CD4-positive, alpha-beta T cell (primary cell): ENCODE measurements at regions of chr11 and their contacts with region 1.

Region 1: GRCh38 chr11:6619004-6619745 is at the start of gene TPP1:
- DNase-seq: peak; percentile 73 to 96 (median 84)
- ATAC-seq: peak; percentile 92
- H3K4me3 ChIP-seq: peak within 1 kb of the TSS; percentile 85
- H3K4me3 Mint-ChIP-seq: no peak within 1 kb of the TSS
- H3K27ac ChIP-seq: peak within 1 kb of the TSS; percentile 73 to 94
- H3K27ac Mint-ChIP-seq: no peak within 1 kb of the TSS
- H3K4me1 ChIP-seq: peaks cover 30% of the 10 kb centered on the region
- H3K4me1 Mint-ChIP-seq: peaks cover 8% of the 10 kb centered on the region
- H3K27me3 ChIP-seq: no peaks in the 10 kb centered on the region
- H3K27me3 Mint-ChIP-seq: no peaks in the 10 kb centered on the region
- CTCF ChIP-seq: no peak
- total RNA-seq, gene TPP1: 29.7 to 34.4 TPM

Region 2: GRCh38 chr11:6603287-6604080 is 15.7 kb before region 1 on chr11 and contains the starts of genes ILK and RRP8:
- CTCF ChIA-PET with region 1: interaction called, 21 read pairs
- POLR2A ChIA-PET with region 1: interaction called, 41 read pairs
- intact Hi-C with region 1: loop called in 1 of 2 experiments (anchors 2 kb)
- DNase-seq: peak; percentile 73 to 94 (median 83)
- ATAC-seq: peak; percentile 75
- H3K4me3 ChIP-seq: peak within 1 kb of the TSS; percentile 78
- H3K4me3 Mint-ChIP-seq: no peak within 1 kb of the TSS
- H3K27ac ChIP-seq: peak within 1 kb of the TSS; percentile 81 to 87
- H3K27ac Mint-ChIP-seq: no peak within 1 kb of the TSS
- H3K4me1 ChIP-seq: peaks cover 73% of the 10 kb centered on the region
- H3K4me1 Mint-ChIP-seq: peaks cover 22% of the 10 kb centered on the region
- H3K27me3 ChIP-seq: no peaks in the 10 kb centered on the region
- H3K27me3 Mint-ChIP-seq: no peaks in the 10 kb centered on the region
- CTCF ChIP-seq: no peak
- total RNA-seq, gene ILK: 19.2 to 21.0 TPM
- total RNA-seq, gene RRP8: 25.7 to 27.3 TPM

Region 3: DNA sequence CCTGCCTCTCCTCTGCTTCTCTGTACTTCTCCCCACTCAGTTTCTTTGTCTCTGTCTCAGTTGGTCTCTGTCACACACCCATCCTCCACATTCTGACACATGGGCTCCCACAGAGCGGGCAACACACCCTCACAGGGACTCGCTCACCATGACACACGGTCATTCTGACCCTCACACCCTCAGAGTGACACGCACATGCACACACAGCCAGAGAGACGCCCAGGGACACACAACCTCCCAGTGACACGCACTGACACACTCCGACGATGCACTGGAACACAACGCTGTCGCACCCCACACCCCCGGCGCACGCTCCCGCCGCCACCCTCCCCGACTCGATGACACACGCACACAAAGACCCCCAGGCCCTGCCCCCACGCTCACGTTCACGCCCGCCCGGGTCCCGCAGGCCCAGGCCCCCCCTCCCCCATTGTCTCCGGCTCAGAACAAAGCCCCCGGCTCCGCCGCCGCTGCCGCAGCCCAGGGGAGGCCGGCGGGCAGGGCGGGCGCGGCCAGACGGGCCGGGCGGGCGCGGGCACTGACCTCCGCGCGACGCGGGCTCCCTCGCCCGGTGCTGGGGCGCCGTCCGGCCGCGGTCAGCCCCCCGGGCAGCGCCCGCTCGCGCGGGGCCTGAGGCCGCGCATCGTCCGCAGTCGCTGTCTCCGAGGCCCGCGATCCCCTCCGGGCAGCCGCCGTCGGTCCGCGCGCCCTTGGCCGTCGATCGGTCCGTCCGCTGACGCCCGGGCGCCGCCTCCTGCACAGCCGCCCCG is 36.0 kb after region 1 on chr11:
- CTCF ChIA-PET with region 1: interaction called, 3 read pairs
- POLR2A ChIA-PET with region 1: interaction called, 7 read pairs
- intact Hi-C with region 1: loop called in 1 of 2 experiments (anchors 2 kb)
- DNase-seq: peak in 7 of 14 experiments; percentile 19 to 67 (median 36)
- ATAC-seq: peak; percentile 61
- H3K4me3 ChIP-seq: peak overlapping the region; percentile 51
- H3K4me3 Mint-ChIP-seq: no peak overlapping the region
- H3K27ac ChIP-seq: peak overlapping the region in 1 of 2 donors; percentile 41
- H3K27ac Mint-ChIP-seq: no peak overlapping the region
- H3K4me1 ChIP-seq: peaks cover 32% of the 10 kb centered on the region
- H3K4me1 Mint-ChIP-seq: peaks cover 12% of the 10 kb centered on the region
- H3K27me3 ChIP-seq: no peaks in the 10 kb centered on the region
- H3K27me3 Mint-ChIP-seq: no peaks in the 10 kb centered on the region
- CTCF ChIP-seq: no peak

Region 4: DNA sequence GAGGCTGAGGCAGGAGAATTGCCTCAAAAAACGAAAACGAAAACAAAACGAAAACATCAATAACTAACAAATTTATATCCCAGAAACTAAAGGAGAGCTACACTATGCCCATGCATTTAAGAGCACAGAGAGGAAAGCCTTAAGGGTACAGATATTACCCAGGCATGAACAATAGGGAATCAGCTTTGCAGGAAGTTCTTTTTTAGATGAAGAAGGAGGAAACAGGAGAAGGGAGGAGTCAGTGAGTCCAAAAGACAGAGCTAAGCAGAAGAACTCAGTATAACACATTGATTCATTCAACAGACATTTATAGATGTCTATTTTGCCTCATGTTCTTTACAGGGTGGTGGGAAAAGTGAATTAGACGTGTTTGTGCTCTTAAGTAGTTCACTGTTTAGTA is 55.7 kb after region 1 on chr11:
- CTCF ChIA-PET with region 1: interaction called, 4 read pairs
- POLR2A ChIA-PET with region 1: interaction called, 134 read pairs
- intact Hi-C with region 1: no loop called
- DNase-seq: no peak
- ATAC-seq: no peak
- H3K4me3 ChIP-seq: no peak overlapping the region
- H3K4me3 Mint-ChIP-seq: no peak overlapping the region
- H3K27ac ChIP-seq: no peak overlapping the region
- H3K27ac Mint-ChIP-seq: no peak overlapping the region
- H3K4me1 ChIP-seq: peaks cover 33% of the 10 kb centered on the region
- H3K4me1 Mint-ChIP-seq: peaks cover 58% of the 10 kb centered on the region
- H3K27me3 ChIP-seq: no peaks in the 10 kb centered on the region
- H3K27me3 Mint-ChIP-seq: no peaks in the 10 kb centered on the region
- CTCF ChIP-seq: no peak

Region 5: DNA sequence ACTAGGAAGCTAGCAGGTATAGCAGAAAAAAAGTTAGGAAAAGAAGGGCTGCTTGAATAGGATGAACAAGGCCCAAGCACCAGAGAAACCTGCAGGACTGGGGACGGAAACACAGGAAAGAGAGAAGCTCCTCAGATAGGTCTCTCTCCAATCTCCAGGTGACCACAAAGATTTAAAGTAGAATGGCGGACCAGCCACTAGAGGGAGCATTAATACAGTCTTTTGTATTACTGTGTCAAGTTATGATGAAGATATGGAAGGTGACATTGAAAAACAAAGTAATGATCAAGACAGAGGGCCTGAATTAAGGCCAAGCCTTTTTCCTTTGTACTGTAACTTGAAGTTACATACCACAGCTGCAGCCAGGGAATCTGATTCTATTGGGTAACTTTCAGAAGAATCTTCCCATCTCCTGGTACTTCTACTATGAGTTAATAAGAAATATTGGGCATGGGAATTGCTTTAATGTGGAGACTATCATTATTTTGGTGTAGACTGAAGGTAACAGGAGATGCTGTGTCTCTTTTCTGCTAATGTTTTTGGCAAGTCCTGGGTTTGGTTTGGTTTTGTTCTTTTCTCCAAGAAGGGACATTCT is 118.8 kb after region 1 on chr11:
- CTCF ChIA-PET with region 1: no interaction called
- POLR2A ChIA-PET with region 1: no interaction called
- intact Hi-C with region 1: no loop called
- DNase-seq: peak; percentile 27 to 88 (median 57)
- ATAC-seq: peak; percentile 56
- H3K4me3 ChIP-seq: no peak overlapping the region
- H3K4me3 Mint-ChIP-seq: peak overlapping the region; percentile 12
- H3K27ac ChIP-seq: peak overlapping the region; percentile 2 to 56
- H3K27ac Mint-ChIP-seq: peak overlapping the region; percentile 76
- H3K4me1 ChIP-seq: peaks cover 62% of the 10 kb centered on the region
- H3K4me1 Mint-ChIP-seq: peaks cover 88% of the 10 kb centered on the region
- H3K27me3 ChIP-seq: no peaks in the 10 kb centered on the region
- H3K27me3 Mint-ChIP-seq: no peaks in the 10 kb centered on the region
- CTCF ChIP-seq: peak; percentile 77

Region 6: GRCh38 chr11:6825231-6825744 is 206.1 kb after region 1 on chr11:
- CTCF ChIA-PET with region 1: no interaction called
- POLR2A ChIA-PET with region 1: no interaction called
- intact Hi-C with region 1: no loop called
- DNase-seq: no peak
- ATAC-seq: no peak
- H3K4me3 ChIP-seq: no peak overlapping the region
- H3K4me3 Mint-ChIP-seq: no peak overlapping the region
- H3K27ac ChIP-seq: no peak overlapping the region
- H3K27ac Mint-ChIP-seq: no peak overlapping the region
- H3K4me1 ChIP-seq: no peaks in the 10 kb centered on the region
- H3K4me1 Mint-ChIP-seq: no peaks in the 10 kb centered on the region
- H3K27me3 ChIP-seq: no peaks in the 10 kb centered on the region
- H3K27me3 Mint-ChIP-seq: peaks cover 17% of the 10 kb centered on the region
- CTCF ChIP-seq: no peak